Activated T-helper 1 cell treated with anti-CD3 and anti-CD28 coated beads, Interleukin-12 subunit alpha, Interleukin-12 subunit beta, Interleukin-2, Interleukin-4 antibody, amounts not matched to agents 30 ng/mL and 10 ng/mL and 1 ng/mL, durations not matched to agents 14 hours and 24 hours and 36 hours (primary cell): ENCODE measurements at regions of chr6 and their contacts with region 1.

Region 1: DNA sequence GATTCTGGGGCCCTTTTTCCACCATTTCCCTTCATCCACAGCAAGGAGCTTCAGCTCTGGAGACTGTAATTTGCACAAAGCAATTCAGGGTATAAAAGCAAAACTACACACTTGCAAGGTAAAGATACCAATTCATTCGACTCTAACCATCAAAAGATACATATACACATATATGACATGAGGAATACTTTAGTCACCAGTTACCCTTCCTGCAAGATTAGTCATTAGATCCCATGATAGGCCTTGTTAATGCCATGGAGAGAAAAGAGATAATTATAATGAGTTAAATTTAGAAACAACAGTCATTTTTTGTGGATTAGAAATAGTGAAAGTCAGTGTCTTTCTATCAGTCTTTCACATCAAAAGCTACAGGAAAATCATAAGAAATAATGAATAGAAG is 204.2 kb downstream of the KCNQ5 start:
- DNase-seq: no peak
- H3K4me3 Mint-ChIP-seq: no peak overlapping the region
- H3K27ac Mint-ChIP-seq: no peak overlapping the region
- H3K4me1 Mint-ChIP-seq: peaks cover 13% of the 10 kb centered on the region
- H3K27me3 Mint-ChIP-seq: no peaks in the 10 kb centered on the region

Region 2: DNA sequence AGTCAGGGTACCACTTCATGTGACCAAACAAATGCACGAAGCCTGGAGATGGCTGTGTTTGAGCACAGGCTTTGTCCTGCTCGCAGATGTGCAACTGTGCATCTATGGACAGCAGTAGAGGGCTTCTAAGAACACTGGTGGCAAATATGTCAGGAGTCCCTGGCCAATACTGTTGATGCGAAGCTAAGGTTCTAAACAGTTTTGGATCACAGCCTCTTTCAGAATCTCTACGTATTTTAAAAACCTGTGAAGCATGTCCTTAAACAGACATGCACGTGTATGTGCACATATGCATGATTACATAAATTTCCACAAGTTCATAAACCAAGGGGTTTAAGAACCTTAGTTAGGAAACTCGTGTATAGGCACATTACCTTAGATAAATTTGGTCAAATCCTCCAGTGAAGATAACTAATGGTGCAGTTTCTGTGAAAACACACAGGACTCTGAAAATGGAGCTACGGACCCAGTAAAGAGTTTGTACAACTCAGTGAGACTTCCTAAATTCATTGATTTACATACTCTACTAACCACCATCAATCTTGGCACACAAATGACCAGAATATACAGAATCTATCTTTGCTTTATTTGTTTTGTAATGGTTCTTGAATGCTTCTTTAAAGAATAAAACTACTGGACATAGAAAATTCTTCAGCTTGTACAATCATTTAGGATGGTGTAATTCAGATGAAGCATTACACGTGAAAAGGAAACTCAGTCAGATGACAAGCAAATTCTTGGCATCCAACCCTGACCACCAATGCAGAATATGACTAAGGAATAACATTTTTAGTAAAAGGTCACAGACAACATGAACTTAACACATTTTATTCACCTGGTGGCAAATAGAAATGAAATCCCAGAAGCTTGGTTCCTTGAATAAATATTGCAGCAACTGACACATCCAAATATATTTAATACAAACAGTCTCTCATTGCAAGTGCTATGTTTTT is 176.7 kb before region 1 on chr6:
- intact Hi-C with region 1: loop called (anchors 1 kb)
- DNase-seq: no peak
- H3K4me3 Mint-ChIP-seq: no peak overlapping the region
- H3K27ac Mint-ChIP-seq: no peak overlapping the region
- H3K4me1 Mint-ChIP-seq: peaks cover 36% of the 10 kb centered on the region
- H3K27me3 Mint-ChIP-seq: no peaks in the 10 kb centered on the region